ENCODE measurements at regions of chr5 and their contacts with region 1.

Region 1: GRCh38 chr5:147403651-147404640 is 105.9 kb downstream of the DPYSL3 start:
- DNase-seq: peak; percentile 96
- H3K4me3 ChIP-seq: no peak overlapping the region
- H3K27ac ChIP-seq: peak overlapping the region; percentile 95
- H3K4me1 ChIP-seq: peaks cover 25% of the 10 kb centered on the region
- H3K27me3 ChIP-seq: no peaks in the 10 kb centered on the region
- CTCF ChIP-seq: no peak
- POLR2A ChIP-seq: no peak

Region 2: DNA sequence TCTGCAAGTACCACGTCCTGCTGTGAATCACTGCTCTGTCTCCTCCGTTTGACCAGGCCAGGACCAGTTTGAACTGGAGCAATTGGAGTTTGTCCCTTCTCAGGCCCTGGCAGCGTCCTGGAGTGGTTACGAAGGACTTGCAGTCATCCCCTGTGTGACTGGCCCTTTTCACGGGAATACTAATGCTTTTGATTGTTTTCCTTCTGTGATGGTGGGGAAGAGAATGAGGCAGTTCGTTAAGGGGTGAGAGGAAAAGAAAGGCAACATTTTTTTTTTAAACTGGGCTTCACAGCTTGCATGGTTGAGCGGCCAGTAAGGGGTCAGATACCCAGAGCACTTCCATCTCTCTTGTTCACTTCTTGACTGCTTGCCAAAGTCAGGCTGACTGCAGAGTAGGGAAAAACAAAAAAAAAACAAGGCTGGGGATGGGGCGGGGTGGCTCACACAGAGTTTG is 322.6 kb before region 1 on chr5:
- CTCF ChIA-PET with region 1: no interaction called
- POLR2A ChIA-PET with region 1: no interaction called
- dilution Hi-C with region 1: no loop called
- intact Hi-C with region 1: no loop called
- DNase-seq: no peak
- H3K4me3 ChIP-seq: no peak overlapping the region
- H3K27ac ChIP-seq: no peak overlapping the region
- H3K4me1 ChIP-seq: no peaks in the 10 kb centered on the region
- H3K27me3 ChIP-seq: no peaks in the 10 kb centered on the region
- CTCF ChIP-seq: no peak
- POLR2A ChIP-seq: no peak

Region 3: DNA sequence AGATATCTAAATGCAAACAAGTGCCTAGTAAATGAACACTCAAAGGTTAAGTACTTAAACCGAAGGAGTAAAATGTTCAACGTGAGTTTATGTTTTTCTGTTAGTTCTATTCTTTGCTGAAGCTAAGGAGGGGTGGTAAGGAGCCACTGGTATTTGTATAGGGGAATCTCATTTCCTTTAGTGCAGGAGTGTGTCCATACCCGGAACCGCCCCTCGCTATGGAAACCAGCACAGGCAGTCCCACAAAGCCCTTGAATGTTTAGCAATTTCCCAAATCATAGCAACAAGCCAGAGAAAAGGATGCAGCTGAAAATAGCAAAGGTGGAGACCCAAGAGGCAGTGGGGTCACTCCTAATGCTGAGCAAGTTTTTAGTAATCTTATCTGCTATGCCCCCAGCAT is 247.9 kb before region 1 on chr5:
- CTCF ChIA-PET with region 1: no interaction called
- POLR2A ChIA-PET with region 1: no interaction called
- dilution Hi-C with region 1: no loop called
- intact Hi-C with region 1: no loop called
- DNase-seq: no peak
- H3K4me3 ChIP-seq: no peak overlapping the region
- H3K27ac ChIP-seq: no peak overlapping the region
- H3K4me1 ChIP-seq: no peaks in the 10 kb centered on the region
- H3K27me3 ChIP-seq: no peaks in the 10 kb centered on the region
- CTCF ChIP-seq: no peak
- POLR2A ChIP-seq: no peak

Region 4: GRCh38 chr5:147310059-147310704 is 93.8 kb before region 1 on chr5:
- CTCF ChIA-PET with region 1: no interaction called
- POLR2A ChIA-PET with region 1: no interaction called
- dilution Hi-C with region 1: no loop called
- intact Hi-C with region 1: loop called (anchors 1 kb)
- DNase-seq: peak; percentile 96
- H3K4me3 ChIP-seq: no peak overlapping the region
- H3K27ac ChIP-seq: peak overlapping the region; percentile 83
- H3K4me1 ChIP-seq: peaks cover 15% of the 10 kb centered on the region
- H3K27me3 ChIP-seq: no peaks in the 10 kb centered on the region
- CTCF ChIP-seq: no peak
- POLR2A ChIP-seq: no peak

Region 5: GRCh38 chr5:147391781-147392180 is 12.2 kb before region 1 on chr5:
- CTCF ChIA-PET with region 1: interaction called, 23 read pairs
- POLR2A ChIA-PET with region 1: no interaction called
- dilution Hi-C with region 1: no loop called
- intact Hi-C with region 1: loop called (anchors 1 kb)
- DNase-seq: peak; percentile 80
- H3K4me3 ChIP-seq: no peak overlapping the region
- H3K27ac ChIP-seq: no peak overlapping the region
- H3K4me1 ChIP-seq: peaks cover 12% of the 10 kb centered on the region
- H3K27me3 ChIP-seq: no peaks in the 10 kb centered on the region
- CTCF ChIP-seq: peak; percentile 63 to 73
- POLR2A ChIP-seq: no peak

Region 6: GRCh38 chr5:147539053-147539452 is 135.1 kb after region 1 on chr5:
- CTCF ChIA-PET with region 1: no interaction called
- POLR2A ChIA-PET with region 1: no interaction called
- dilution Hi-C with region 1: no loop called
- intact Hi-C with region 1: loop called (anchors 1 kb)
- DNase-seq: peak; percentile 53
- H3K4me3 ChIP-seq: no peak overlapping the region
- H3K27ac ChIP-seq: no peak overlapping the region
- H3K4me1 ChIP-seq: peaks cover 33% of the 10 kb centered on the region
- H3K27me3 ChIP-seq: no peaks in the 10 kb centered on the region
- CTCF ChIP-seq: no peak
- POLR2A ChIP-seq: no peak